ENCODE measurements at regions of chr19 and their contacts with region 1.

Region 1: GRCh38 chr19:7680606-7681339 is at the start of gene TRAPPC5:
- DNase-seq: peak; percentile 88
- H3K4me3 Mint-ChIP-seq: peak within 1 kb of the TSS; percentile 93
- H3K27ac Mint-ChIP-seq: peak within 1 kb of the TSS; percentile 96
- H3K4me1 Mint-ChIP-seq: peaks cover 45% of the 10 kb centered on the region
- H3K27me3 Mint-ChIP-seq: peaks cover 14% of the 10 kb centered on the region
- total RNA-seq, gene TRAPPC5: 72.2 and 86.8 TPM in 2 replicates

Region 2: DNA sequence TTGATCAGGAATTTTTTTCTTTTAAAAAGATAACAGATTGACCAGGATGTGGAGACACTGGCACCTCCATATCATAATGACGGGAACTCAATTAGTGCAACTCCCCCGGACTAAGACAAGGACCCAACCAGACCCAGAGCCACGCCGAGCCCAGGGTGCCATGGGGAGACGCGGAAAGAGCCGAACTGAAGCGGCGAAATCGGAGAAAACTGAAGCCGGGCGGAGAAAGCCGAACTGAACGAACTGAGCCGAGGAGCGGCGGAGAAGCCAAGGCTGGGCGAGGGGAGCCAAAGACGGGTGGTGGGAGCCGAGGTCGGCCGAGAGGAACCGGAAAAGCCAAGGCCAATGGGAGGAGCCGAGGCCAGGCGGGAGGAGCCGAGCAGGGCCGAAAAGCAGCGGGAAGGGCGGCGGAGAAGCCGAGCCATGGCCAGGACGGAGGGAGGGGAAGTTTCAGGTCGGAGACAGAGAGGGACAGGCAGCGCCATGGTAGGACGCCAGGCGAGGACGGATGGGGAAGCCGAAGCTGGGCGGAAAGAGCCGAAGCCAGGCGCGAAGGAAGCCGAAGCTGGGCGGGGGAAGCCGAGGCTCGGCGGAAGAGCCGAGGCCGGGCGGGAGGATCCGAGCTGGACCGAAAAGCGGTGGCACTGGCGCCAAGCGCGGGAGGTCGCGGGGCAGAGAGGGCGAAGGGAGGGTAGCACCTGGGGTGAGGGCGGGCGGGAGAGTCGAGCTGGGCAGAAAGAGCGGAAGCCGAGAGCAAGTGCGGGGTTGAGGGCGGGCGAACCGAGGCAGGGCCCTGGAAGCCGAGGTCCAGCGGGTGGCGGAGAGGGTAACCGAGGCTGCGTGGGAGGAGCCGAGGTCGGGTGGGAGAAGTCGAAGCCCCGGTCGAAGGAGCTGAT is 581.8 kb before region 1 on chr19:
- intact Hi-C with region 1: loop called (anchors 2 kb)
- DNase-seq: peak; percentile 84
- H3K4me3 Mint-ChIP-seq: peak overlapping the region; percentile 88
- H3K27ac Mint-ChIP-seq: peak overlapping the region; percentile 85
- H3K4me1 Mint-ChIP-seq: peaks cover 13% of the 10 kb centered on the region
- H3K27me3 Mint-ChIP-seq: peaks cover 4% of the 10 kb centered on the region

Region 3: DNA sequence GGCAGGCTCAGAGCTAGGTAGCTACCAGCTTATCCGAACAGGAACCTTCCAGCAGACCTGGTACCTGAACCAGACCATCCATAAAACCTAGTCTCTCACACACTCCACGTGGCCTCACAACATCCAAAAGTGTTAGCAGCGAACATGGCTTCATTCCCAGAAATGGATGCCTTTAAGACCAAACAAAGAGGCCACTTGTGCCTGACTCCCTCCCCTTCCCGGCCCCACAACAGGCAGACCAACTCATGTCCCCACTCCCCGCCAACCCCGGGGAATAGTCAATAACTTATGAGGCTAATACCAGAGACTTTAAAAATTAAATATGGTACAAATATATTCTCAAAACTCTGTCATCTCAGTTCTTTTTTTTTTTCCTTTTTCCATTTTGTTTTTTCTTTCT is 565.1 kb before region 1 on chr19:
- intact Hi-C with region 1: no loop called
- DNase-seq: no peak
- H3K4me3 Mint-ChIP-seq: no peak overlapping the region
- H3K27ac Mint-ChIP-seq: no peak overlapping the region
- H3K4me1 Mint-ChIP-seq: no peaks in the 10 kb centered on the region
- H3K27me3 Mint-ChIP-seq: no peaks in the 10 kb centered on the region

Region 4: GRCh38 chr19:7366701-7367420 is 313.9 kb before region 1 on chr19:
- intact Hi-C with region 1: loop called (anchors 2 kb)
- DNase-seq: peak; percentile 22
- H3K4me3 Mint-ChIP-seq: no peak overlapping the region
- H3K27ac Mint-ChIP-seq: peak overlapping the region; percentile 35
- H3K4me1 Mint-ChIP-seq: no peaks in the 10 kb centered on the region
- H3K27me3 Mint-ChIP-seq: no peaks in the 10 kb centered on the region

Region 5: DNA sequence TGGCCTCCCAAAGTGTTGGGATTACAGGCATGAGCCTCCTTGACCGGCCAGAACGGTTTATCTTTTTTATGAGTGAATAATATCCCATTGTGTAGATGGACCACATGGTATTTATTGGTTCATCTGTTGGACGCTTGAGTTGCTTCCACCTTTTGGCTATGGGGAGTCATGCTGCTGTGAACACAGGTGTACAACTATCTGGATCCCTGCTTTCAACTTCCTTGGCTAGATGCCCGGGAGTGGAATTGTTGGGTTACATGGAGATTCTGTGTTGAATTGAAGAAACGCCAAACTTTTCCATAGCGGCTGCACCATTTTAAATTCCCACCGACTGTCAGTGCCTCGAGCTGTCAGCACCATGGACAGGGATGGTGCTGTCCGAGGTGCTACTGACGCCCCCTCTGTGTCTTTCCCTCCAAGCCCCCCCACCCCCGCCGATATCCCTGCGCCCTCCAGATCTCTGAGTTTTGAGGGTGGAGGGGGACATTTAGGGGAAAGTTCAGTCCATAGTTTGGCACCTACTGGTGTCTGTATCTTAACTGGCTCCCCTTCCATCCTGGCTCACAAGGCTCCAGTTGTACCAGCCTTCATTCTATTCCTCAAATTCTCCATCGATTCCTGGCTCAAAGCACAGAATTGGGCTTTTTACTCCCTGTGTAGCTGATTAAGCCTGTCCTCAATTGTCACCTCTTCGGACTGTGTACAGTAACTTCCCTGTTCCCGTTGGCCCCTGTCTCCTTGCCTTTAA is 118.0 kb before region 1 on chr19:
- intact Hi-C with region 1: loop called (anchors 1 kb)
- DNase-seq: no peak
- H3K4me3 Mint-ChIP-seq: no peak overlapping the region
- H3K27ac Mint-ChIP-seq: no peak overlapping the region
- H3K4me1 Mint-ChIP-seq: no peaks in the 10 kb centered on the region
- H3K27me3 Mint-ChIP-seq: no peaks in the 10 kb centered on the region

Region 6: DNA sequence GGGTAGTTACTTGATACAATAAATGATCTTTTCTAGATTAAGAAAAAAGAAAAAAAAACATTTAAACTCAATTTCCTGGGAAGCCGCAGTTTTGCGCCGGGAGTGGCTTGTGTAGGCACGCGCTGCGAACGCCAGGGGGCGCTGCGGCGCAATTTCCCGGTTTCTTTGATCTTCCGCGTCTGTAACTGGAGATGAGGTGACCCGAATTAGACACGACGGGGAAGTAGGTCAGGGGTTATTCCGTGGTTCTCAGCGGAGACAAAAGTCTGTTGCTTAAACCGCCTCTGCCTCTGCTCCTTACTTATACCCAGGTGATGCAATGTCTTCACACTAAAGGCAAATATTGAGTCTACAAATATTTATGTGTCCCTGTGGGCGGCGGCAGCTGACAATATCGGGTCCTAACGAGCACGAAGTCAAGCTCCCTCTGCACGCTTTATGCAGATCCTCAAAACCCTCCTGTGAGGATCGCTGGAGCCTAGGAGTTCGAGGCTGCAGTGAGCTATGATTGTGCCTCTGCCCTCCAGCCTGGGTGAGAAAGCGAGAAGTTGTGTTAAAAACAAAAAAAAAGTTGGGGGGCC is 28.6 kb before region 1 on chr19:
- intact Hi-C with region 1: loop called (anchors 1 kb)
- DNase-seq: peak; percentile 81
- H3K4me3 Mint-ChIP-seq: peak overlapping the region; percentile 70
- H3K27ac Mint-ChIP-seq: peak overlapping the region; percentile 52
- H3K4me1 Mint-ChIP-seq: peaks cover 13% of the 10 kb centered on the region
- H3K27me3 Mint-ChIP-seq: peaks cover 7% of the 10 kb centered on the region

Region 7: GRCh38 chr19:7705387-7706187 is 24.8 kb after region 1 on chr19:
- intact Hi-C with region 1: no loop called
- DNase-seq: peak; percentile 53
- H3K4me3 Mint-ChIP-seq: peak overlapping the region; percentile 53
- H3K27ac Mint-ChIP-seq: peak overlapping the region; percentile 64
- H3K4me1 Mint-ChIP-seq: peaks cover 18% of the 10 kb centered on the region
- H3K27me3 Mint-ChIP-seq: peaks cover 24% of the 10 kb centered on the region

Region 8: DNA sequence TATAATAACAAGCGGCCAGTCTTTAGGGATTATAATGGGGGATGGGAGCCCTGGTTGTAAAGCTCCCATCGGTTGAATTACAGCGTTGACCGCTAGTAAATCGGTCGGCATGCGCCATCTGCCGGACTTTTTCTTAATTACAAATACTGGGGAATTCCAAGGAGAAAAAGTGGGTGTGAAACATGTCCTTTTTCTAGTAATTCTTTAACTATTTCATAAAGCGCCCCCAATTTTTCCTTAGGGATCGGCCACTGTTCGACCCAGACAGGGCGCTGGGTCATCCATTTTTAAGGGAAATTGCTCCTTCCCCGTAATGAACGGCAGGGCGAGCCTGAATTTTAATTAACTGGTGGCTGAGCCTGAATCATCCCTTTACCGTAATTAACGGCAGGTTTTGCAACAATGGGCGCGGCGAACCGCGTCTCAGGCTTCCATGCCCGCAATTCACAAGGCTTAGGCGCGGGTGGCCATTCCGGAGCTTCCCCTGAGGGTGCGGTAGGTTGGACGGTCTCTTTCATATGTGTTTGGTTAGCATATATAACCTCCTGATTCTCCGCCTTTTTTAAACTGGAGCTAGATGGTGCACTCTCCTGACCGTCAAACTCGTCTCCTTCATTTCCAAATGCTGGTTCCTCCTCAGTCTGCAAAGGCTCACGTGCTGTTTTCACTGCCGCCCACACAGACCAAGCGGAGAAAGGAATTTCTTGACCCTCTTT is 119.0 kb after region 1 on chr19:
- intact Hi-C with region 1: loop called (anchors 1 kb)
- DNase-seq: peak; percentile 37
- H3K4me3 Mint-ChIP-seq: no peak overlapping the region
- H3K27ac Mint-ChIP-seq: no peak overlapping the region
- H3K4me1 Mint-ChIP-seq: peaks cover 11% of the 10 kb centered on the region
- H3K27me3 Mint-ChIP-seq: peaks cover 36% of the 10 kb centered on the region

Region 9: GRCh38 chr19:7903244-7904073 is 222.7 kb after region 1 on chr19 and contains the start of gene MAP2K7:
- intact Hi-C with region 1: loop called (anchors 1 kb)
- DNase-seq: peak; percentile 100
- H3K4me3 Mint-ChIP-seq: peak within 1 kb of the TSS; percentile 90
- H3K27ac Mint-ChIP-seq: peak within 1 kb of the TSS; percentile 94
- H3K4me1 Mint-ChIP-seq: peaks cover 29% of the 10 kb centered on the region
- H3K27me3 Mint-ChIP-seq: peaks cover 2% of the 10 kb centered on the region
- total RNA-seq, gene MAP2K7: 47.6 and 51.9 TPM in 2 replicates